ENCODE measurements at regions of chr19 and their contacts with region 1.

Region 1: DNA sequence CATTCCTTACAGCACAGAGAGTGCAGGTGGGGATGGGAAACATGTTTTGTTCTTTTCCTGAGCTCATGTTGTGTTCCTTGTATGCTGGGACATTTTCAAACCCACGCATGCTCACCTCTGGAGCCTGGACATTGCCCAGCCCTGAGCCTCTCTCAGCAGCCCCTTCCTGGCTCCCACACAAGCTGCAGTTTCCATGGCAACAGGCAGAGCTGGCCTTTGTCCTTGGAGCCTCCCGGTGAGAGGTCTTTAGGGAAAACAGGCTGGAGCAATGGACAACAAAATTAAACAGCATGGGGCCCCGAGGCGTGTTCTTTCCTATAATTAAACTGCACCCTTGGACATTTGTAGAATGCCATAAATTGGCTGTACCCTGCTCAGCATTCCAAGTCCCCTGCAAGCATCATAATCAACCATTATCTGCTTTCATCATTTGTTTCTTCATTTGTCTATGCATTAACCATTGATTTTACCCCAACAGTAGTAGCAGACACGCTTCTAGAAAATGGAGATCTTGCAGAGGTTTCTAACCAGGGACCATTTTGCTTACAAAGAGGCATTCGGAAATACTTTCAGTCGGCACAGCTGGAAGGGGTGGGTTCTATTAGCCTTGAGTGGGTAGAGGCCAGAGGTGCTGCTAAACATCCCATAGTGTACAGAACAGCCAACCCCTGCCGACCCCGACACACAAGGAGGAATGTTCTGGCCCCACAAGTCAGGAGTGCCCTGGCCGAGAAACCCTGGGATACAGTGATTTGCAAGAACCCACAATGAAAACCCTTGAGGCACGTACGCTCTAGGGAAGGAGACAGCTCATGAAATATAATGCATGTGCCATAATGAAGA is 133.4 kb upstream of the PEG3 start:
- DNase-seq: peak; percentile 94
- ATAC-seq: peak; percentile 75
- H3K4me3 ChIP-seq: peak overlapping the region in 1 of 3 experiments; percentile 25; a peak in 1 of 6 replicates
- H3K27ac ChIP-seq: peak overlapping the region; percentile 94
- H3K4me1 ChIP-seq: peaks cover 97% of the 10 kb centered on the region
- H3K27me3 ChIP-seq: no peaks in the 10 kb centered on the region
- CTCF ChIP-seq: no peak
- EP300 ChIP-seq: no peak; a peak in 1 of 4 replicates
- POLR2A ChIP-seq: 0 out of 4 replicates have a peak, but pooled peaks of 1 of the 2 experiments have one; percentile 35
- RAD21 ChIP-seq: no peak

Region 2: GRCh38 chr19:56838909-56839651 is 134.9 kb before region 1 on chr19:
- CTCF ChIA-PET with region 1: no interaction called
- POLR2A ChIA-PET with region 1: interaction called, 52 read pairs
- in situ Hi-C with region 1: no loop called
- intact Hi-C with region 1: loop called (anchors 1 kb)
- DNase-seq: peak; percentile 97
- ATAC-seq: peak; percentile 63
- H3K4me3 ChIP-seq: peak overlapping the region; percentile 55 to 96 (median 84); a peak in 5 of 6 replicates
- H3K27ac ChIP-seq: peak overlapping the region; percentile 90
- H3K4me1 ChIP-seq: peaks cover 49% of the 10 kb centered on the region
- H3K27me3 ChIP-seq: no peaks in the 10 kb centered on the region
- CTCF ChIP-seq: no peak
- EP300 ChIP-seq: 0 out of 4 replicates have a peak, but pooled peaks of 1 of the 2 experiments have one; percentile 15
- POLR2A ChIP-seq: peak; percentile 40 to 75
- RAD21 ChIP-seq: no peak

Region 3: GRCh38 chr19:56866538-56866937 is 107.4 kb before region 1 on chr19:
- CTCF ChIA-PET with region 1: no interaction called
- POLR2A ChIA-PET with region 1: no interaction called
- in situ Hi-C with region 1: no loop called
- intact Hi-C with region 1: no loop called
- DNase-seq: no peak
- ATAC-seq: no peak
- H3K4me3 ChIP-seq: no peak overlapping the region
- H3K27ac ChIP-seq: no peak overlapping the region
- H3K4me1 ChIP-seq: peaks cover 21% of the 10 kb centered on the region
- H3K27me3 ChIP-seq: no peaks in the 10 kb centered on the region
- CTCF ChIP-seq: no peak
- EP300 ChIP-seq: no peak
- POLR2A ChIP-seq: no peak
- RAD21 ChIP-seq: no peak

Region 4: GRCh38 chr19:56900573-56901097 is 73.3 kb before region 1 on chr19:
- CTCF ChIA-PET with region 1: no interaction called
- POLR2A ChIA-PET with region 1: interaction called, 12 read pairs
- in situ Hi-C with region 1: no loop called
- intact Hi-C with region 1: no loop called
- DNase-seq: peak; percentile 98
- ATAC-seq: peak; percentile 96
- H3K4me3 ChIP-seq: peak overlapping the region in 1 of 3 experiments; percentile 30; a peak in 1 of 6 replicates
- H3K27ac ChIP-seq: peak overlapping the region; percentile 98
- H3K4me1 ChIP-seq: peaks cover 65% of the 10 kb centered on the region
- H3K27me3 ChIP-seq: no peaks in the 10 kb centered on the region
- CTCF ChIP-seq: peak; percentile 17; the same call in 1 of the 2 replicates
- EP300 ChIP-seq: peak; percentile 98 to 99
- POLR2A ChIP-seq: peak; percentile 72 to 75
- RAD21 ChIP-seq: peak; percentile 68

Region 5: GRCh38 chr19:56927791-56928221 is 46.1 kb before region 1 on chr19:
- CTCF ChIA-PET with region 1: no interaction called
- POLR2A ChIA-PET with region 1: interaction called, 17 read pairs
- in situ Hi-C with region 1: no loop called
- intact Hi-C with region 1: loop called (anchors 5 kb)
- DNase-seq: peak; percentile 80
- ATAC-seq: peak; percentile 61
- H3K4me3 ChIP-seq: no peak overlapping the region
- H3K27ac ChIP-seq: peak overlapping the region; percentile 75
- H3K4me1 ChIP-seq: peaks cover 76% of the 10 kb centered on the region
- H3K27me3 ChIP-seq: no peaks in the 10 kb centered on the region
- CTCF ChIP-seq: no peak
- EP300 ChIP-seq: peak in 1 of 2 experiments; percentile 93; a peak in 1 of 4 replicates
- POLR2A ChIP-seq: no peak
- RAD21 ChIP-seq: no peak

Region 6: GRCh38 chr19:56955558-56956216 is 18.2 kb before region 1 on chr19:
- CTCF ChIA-PET with region 1: no interaction called
- POLR2A ChIA-PET with region 1: interaction called, 34 read pairs
- in situ Hi-C with region 1: no loop called
- intact Hi-C with region 1: loop called (anchors 2 kb)
- DNase-seq: peak; percentile 97
- ATAC-seq: peak; percentile 98
- H3K4me3 ChIP-seq: peak overlapping the region in 1 of 3 experiments; percentile 44; a peak in 2 of 6 replicates
- H3K27ac ChIP-seq: peak overlapping the region; percentile 88
- H3K4me1 ChIP-seq: peaks cover 60% of the 10 kb centered on the region
- H3K27me3 ChIP-seq: no peaks in the 10 kb centered on the region
- CTCF ChIP-seq: peak; percentile 28
- EP300 ChIP-seq: peak in 1 of 2 experiments; percentile 98; a peak in 2 of 4 replicates
- POLR2A ChIP-seq: peak in 1 of 2 experiments; percentile 56; a peak in 2 of 4 replicates
- RAD21 ChIP-seq: 0 out of 2 replicates have a peak, but pooled peaks have one; percentile 45

Measured in HepG2 (cell line).